ENCODE measurements at regions of chr10 and their contacts with region 1.

Region 1: DNA sequence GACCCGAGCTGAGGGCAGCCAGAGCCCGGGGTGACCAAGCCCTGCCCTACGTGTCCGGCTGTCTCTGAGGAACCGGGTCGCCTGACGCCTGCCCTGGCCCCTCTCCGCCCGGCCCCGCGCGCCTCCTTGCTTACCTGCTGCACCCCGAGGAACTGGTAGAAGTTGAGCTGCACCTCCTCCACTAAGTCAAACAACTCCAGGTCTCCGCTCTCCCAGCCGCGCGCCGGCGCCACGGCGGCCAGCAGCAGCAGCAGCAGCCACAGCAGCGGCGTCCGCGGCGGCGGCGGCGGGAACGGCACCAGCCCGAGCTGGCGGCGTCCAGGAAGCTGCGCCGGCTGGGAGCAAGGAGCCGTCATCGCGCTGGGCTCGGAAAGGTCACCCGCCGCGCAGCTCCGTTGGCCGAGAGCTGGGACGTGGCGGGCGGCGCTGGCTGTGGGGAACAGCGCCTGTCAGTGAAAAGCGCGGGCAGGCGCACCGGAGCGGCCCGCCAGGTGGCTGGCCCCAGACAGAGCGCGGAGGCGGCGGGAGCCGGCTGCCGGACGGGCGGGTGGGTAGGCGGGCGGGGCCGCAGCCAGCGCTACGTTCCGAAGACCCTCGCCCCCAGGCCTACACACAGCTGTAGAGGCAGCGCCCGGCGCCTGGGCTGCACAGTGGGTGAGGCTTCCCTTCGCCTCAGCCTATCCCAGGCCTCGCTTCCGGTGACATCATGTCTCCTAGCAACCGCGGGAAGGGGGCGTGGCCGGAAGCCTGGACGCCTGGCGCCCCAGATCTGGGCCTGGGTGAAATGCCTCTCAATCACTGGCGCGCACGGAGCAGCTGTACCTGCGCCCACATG is at the start of gene DNAJC1:
- DNase-seq: peak; percentile 97 to 99 (median 98)
- ATAC-seq: peak; percentile 100
- H3K4me3 ChIP-seq: peak within 1 kb of the TSS; percentile 69 to 96 (median 78)
- H3K27ac ChIP-seq: peak within 1 kb of the TSS; percentile 78 to 99 (median 96)
- H3K4me1 ChIP-seq: peaks cover 0 to 26% (median 14%) of the 10 kb centered on the region in 12 donors
- H3K27me3 ChIP-seq: no peaks in the 10 kb centered on the region
- CTCF ChIP-seq: peak in 4 of 12 donors; percentile 4 to 29 (median 16)
- POLR2A ChIP-seq: peak in 1 of 2 donors; percentile 95
- total RNA-seq, gene DNAJC1: 9.5 to 68.4 (median 14.1) TPM

Region 2: GRCh38 chr10:21533467-21534279 is 469.6 kb before region 1 on chr10 and contains the start of gene MLLT10:
- intact Hi-C with region 1: loop called in 1 of 10 experiments (anchors 10 kb)
- DNase-seq: peak; percentile 96 to 98 (median 97)
- ATAC-seq: peak; percentile 86 to 97 (median 94)
- H3K4me3 ChIP-seq: peak within 1 kb of the TSS; percentile 54 to 88 (median 78)
- H3K27ac ChIP-seq: peak within 1 kb of the TSS; percentile 89 to 99 (median 97)
- H3K4me1 ChIP-seq: peaks cover 0 to 31% (median 22%) of the 10 kb centered on the region in 12 donors
- H3K27me3 ChIP-seq: no peaks in the 10 kb centered on the region
- CTCF ChIP-seq: peak in 7 of 12 donors; percentile 17 to 44 (median 21)
- POLR2A ChIP-seq: peak in 1 of 2 donors; percentile 76
- total RNA-seq, gene MLLT10: 17.1 to 30.7 (median 25.2) TPM

Region 3: DNA sequence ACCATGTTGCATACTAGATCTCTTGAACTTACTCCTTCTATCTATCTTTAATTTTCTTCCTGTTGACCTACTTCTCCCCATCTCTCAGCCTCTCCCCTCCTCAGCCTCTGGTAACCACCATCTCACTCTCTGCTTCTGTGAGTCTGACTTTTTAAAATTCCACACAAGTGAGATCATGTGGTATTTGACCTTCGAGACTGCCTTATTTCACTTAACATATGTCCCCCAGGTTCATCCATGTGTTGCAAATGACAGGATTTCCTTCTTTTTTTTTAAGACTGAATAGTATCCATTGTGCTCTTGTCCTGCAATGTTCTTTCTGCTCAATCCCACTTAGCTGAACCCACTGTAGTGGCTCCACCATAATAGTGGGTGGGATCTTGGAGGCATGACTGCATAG is 51.7 kb after region 1 on chr10:
- intact Hi-C with region 1: no loop called
- DNase-seq: no peak
- ATAC-seq: no peak
- H3K4me3 ChIP-seq: no peak overlapping the region
- H3K27ac ChIP-seq: no peak overlapping the region
- H3K4me1 ChIP-seq: no peaks in the 10 kb centered on the region
- H3K27me3 ChIP-seq: no peaks in the 10 kb centered on the region
- CTCF ChIP-seq: no peak
- POLR2A ChIP-seq: no peak

Region 4: DNA sequence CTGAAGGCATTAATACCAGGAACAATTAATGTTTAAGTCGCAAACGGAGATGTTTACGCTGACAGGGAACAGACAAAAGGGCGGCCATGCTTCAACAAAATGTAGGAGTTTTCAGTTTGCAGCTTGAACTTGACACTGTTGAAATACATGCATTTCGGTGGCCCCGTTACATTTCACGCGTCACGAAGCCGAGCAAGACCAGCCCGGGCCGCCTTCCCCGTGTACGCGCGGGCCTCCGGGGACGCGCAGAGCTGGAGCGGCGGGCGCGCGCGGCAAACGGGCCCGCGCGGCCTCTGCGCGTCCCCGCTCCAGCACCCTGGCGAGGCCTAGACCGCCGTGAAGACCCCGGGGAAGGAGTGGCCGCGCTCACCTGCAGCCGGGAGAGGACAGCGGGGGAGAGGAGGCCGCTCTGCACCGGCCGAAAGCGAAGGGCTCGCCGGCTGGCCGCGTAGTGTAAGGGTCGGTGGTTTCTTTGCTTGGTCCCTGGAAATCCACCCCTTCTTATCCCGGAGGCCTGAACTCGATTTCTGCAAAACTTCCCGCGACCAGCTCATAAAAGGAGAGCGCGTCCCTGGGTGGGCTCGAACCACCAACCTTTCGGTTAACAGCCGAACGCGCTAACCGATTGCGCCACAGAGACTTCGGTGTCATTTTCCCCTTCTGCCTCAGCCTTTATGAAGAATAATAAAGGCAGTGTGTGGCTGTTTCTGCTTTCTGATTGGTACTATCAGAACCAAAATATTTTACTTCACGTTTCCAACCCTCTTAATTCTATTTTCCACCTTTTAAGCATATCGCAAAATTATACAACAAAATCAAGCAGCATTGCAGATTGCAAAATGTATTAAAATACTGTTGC is 225.9 kb after region 1 on chr10:
- intact Hi-C with region 1: loop called in 5 of 10 experiments (anchors 2 to 10 kb)
- DNase-seq: peak; percentile 85 to 90 (median 88)
- ATAC-seq: peak; percentile 91 to 100 (median 98)
- H3K4me3 ChIP-seq: peak overlapping the region; percentile 57 to 89 (median 77)
- H3K27ac ChIP-seq: peak overlapping the region; percentile 85 to 97 (median 92)
- H3K4me1 ChIP-seq: peaks cover 0 to 9% (median 6%) of the 10 kb centered on the region in 12 donors
- H3K27me3 ChIP-seq: no peaks in the 10 kb centered on the region
- CTCF ChIP-seq: no peak
- POLR2A ChIP-seq: peak in 1 of 2 donors; percentile 56

Region 5: DNA sequence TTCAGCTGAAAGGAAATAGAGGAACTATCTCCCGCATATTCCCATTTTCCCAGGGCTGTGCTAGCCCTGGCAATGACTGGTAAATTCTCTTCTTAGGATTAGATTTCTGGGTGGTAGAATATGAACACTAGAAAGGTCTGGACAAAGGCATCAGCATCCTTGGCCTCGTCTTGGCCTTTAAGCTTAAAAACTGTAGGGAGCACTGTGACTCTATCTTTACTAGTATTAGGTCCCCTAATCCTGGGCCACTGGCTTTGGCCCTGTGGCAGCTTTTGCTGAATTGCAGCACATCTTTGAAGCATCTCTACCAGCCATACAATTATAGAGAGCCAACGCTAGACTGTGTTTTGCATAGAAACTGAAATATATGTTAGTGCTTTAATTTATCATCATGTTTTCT is 256.0 kb after region 1 on chr10:
- intact Hi-C with region 1: loop called in 5 of 10 experiments (anchors 5 to 10 kb)
- DNase-seq: no peak
- ATAC-seq: no peak
- H3K4me3 ChIP-seq: no peak overlapping the region
- H3K27ac ChIP-seq: no peak overlapping the region
- H3K4me1 ChIP-seq: peaks cover 0 to 6% (median 0%) of the 10 kb centered on the region in 12 donors
- H3K27me3 ChIP-seq: peaks cover 0 to 1% (median 0%) of the 10 kb centered on the region in 9 donors
- CTCF ChIP-seq: no peak
- POLR2A ChIP-seq: no peak

Region 6: GRCh38 chr10:22325272-22326144 is 322.2 kb after region 1 on chr10:
- intact Hi-C with region 1: loop called in 4 of 10 experiments (anchors 2 to 10 kb)
- DNase-seq: peak; percentile 80 to 89 (median 85)
- ATAC-seq: peak in 3 of 4 donors; percentile 54 to 67 (median 55)
- H3K4me3 ChIP-seq: peak overlapping the region; percentile 28 to 76 (median 62)
- H3K27ac ChIP-seq: peak overlapping the region in 11 of 12 donors; percentile 48 to 77 (median 65)
- H3K4me1 ChIP-seq: peaks cover 0 to 42% (median 31%) of the 10 kb centered on the region in 12 donors
- H3K27me3 ChIP-seq: peaks cover 0 to 29% (median 0%) of the 10 kb centered on the region in 9 donors
- CTCF ChIP-seq: no peak
- POLR2A ChIP-seq: no peak

Region 7: DNA sequence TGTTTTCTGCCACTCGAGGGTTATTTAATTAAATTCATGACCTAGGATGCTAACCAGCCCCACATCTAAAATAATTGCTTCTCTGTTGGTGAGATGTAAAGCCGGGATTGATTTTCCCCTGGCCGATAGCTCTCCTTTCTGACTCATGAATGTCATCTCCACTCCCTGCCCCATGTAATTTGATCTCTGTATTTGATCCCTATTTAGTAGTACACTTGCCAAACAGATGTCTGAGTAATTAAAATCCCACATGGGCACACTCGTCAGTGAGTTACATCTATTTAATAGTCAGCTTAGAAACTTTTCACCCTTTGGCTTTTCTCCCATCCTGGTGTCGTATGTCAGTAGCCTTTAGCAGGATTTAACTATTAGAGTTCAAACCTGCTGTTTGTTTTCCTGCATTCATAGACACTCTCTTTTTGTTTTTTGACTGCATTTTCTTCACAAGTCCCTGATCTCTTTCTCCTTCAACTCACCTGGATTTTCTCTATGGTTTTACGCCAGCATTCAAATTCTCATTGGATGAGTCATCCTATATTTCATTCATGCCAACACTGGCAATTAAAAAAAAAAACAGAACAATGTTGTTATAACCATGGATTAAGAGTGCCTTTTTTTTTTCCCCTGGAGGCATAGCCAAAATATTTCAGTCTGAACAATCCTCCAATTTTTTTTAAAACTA is 424.7 kb after region 1 on chr10:
- intact Hi-C with region 1: loop called in 5 of 10 experiments (anchors 10 kb)
- DNase-seq: no peak
- ATAC-seq: peak in 2 of 4 donors; percentile 33 to 42
- H3K4me3 ChIP-seq: no peak overlapping the region
- H3K27ac ChIP-seq: no peak overlapping the region
- H3K4me1 ChIP-seq: peaks cover 0 to 11% (median 7%) of the 10 kb centered on the region in 12 donors
- H3K27me3 ChIP-seq: peaks cover 0 to 9% (median 0%) of the 10 kb centered on the region in 9 donors
- CTCF ChIP-seq: no peak
- POLR2A ChIP-seq: no peak

Region 8: DNA sequence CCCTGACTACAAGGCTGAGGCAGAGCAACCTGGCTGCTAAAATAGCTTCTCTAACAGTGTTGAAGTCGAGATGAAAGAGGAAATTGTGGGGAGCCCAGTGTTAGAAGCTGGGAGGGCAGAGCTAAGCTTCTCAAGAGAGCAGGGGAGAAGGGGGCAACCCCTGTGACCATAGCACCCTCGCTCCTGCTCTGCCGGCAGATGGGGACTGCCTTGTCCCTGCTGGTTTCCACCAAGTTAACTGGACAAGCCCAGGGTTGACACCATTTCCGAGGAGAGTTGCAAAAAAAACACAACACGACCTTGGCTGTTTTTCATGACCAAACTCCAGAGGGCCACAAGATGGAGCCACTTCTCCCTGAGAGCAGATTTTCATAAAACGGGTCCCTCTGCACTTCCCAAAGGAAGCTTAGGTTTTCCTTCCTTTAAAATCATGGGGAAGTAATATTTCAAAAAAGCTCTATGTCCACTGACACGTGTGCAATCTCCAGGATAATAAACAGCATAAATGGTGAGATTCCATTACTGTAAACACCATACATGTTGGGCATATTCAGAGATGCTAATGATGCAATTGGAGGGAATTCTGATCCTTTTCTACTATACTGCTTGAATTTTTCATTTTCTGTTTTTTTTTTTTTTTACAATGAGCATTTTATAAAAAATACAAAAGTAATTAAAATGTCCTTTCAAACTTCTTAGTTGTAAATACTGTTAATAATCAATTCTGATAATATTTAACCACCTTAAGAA is 570.7 kb after region 1 on chr10:
- intact Hi-C with region 1: loop called in 3 of 10 experiments (anchors 10 kb)
- DNase-seq: peak in 1 of 5 donors; percentile 24
- ATAC-seq: peak in 2 of 4 donors; percentile 49 to 53
- H3K4me3 ChIP-seq: no peak overlapping the region
- H3K27ac ChIP-seq: no peak overlapping the region
- H3K4me1 ChIP-seq: peaks cover 0 to 15% (median 6%) of the 10 kb centered on the region in 12 donors
- H3K27me3 ChIP-seq: no peaks in the 10 kb centered on the region
- CTCF ChIP-seq: peak in 10 of 12 donors; percentile 22 to 71 (median 37)
- POLR2A ChIP-seq: no peak

Measured in heart left ventricle (tissue), 16 donors.